Upper lobe of right lung (tissue), 1 donor: ENCODE measurements at regions of chr14 and their contacts with region 1.

Region 1: GRCh38 chr14:88492272-88493089 is 62.3 kb downstream of the PTPN21 start:
- DNase-seq: no peak
- ATAC-seq: peak; percentile 95
- H3K4me3 ChIP-seq: no peak overlapping the region
- H3K27ac ChIP-seq: no peak overlapping the region
- H3K4me1 ChIP-seq: no peaks in the 10 kb centered on the region
- H3K27me3 ChIP-seq: no peaks in the 10 kb centered on the region
- CTCF ChIP-seq: peak; percentile 96

Region 2: GRCh38 chr14:88551094-88551870 is 58.8 kb after region 1 on chr14:
- intact Hi-C with region 1: loop called (anchors 10 kb)
- DNase-seq: peak; percentile 90
- ATAC-seq: peak; percentile 87
- H3K4me3 ChIP-seq: peak overlapping the region; percentile 69
- H3K27ac ChIP-seq: peak overlapping the region; percentile 49
- H3K4me1 ChIP-seq: peaks cover 27% of the 10 kb centered on the region
- H3K27me3 ChIP-seq: no peaks in the 10 kb centered on the region
- CTCF ChIP-seq: peak; percentile 30